ENCODE measurements at regions of chr6 and their contacts with region 1.

Region 1: DNA sequence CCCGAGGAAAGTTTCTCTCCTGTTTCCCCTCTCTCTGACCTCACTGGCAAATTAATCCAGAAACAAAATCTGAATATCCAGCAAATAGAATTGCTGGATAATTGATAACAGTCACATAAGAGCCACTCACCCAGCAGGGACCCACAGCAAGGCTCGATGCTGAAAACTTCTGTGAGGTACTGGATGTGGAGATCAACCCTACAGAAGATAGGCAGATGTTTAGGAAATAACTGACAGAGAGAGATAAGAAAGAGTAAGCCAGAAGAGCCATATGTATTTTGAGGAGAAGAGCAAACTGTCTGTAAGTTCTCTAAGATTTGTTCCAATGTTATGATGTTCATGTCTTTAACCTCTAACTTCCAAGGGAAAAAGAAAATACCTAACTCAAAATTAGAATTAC is 59.7 kb downstream of the PKHD1 start:
- DNase-seq: no peak
- ATAC-seq: no peak
- H3K4me3 ChIP-seq: no peak overlapping the region
- H3K27ac ChIP-seq: no peak overlapping the region
- H3K4me1 ChIP-seq: no peaks in the 10 kb centered on the region
- CTCF ChIP-seq: no peak
- EP300 ChIP-seq: no peak
- POLR2A ChIP-seq: no peak
- RAD21 ChIP-seq: no peak

Region 2: GRCh38 chr6:52010806-52011205 is 16.9 kb before region 1 on chr6:
- CTCF ChIA-PET with region 1: no interaction called
- POLR2A ChIA-PET with region 1: no interaction called
- DNase-seq: no peak
- ATAC-seq: no peak
- H3K4me3 ChIP-seq: no peak overlapping the region
- H3K27ac ChIP-seq: no peak overlapping the region
- H3K4me1 ChIP-seq: no peaks in the 10 kb centered on the region
- CTCF ChIP-seq: no peak
- EP300 ChIP-seq: no peak
- POLR2A ChIP-seq: no peak
- RAD21 ChIP-seq: no peak

Region 3: DNA sequence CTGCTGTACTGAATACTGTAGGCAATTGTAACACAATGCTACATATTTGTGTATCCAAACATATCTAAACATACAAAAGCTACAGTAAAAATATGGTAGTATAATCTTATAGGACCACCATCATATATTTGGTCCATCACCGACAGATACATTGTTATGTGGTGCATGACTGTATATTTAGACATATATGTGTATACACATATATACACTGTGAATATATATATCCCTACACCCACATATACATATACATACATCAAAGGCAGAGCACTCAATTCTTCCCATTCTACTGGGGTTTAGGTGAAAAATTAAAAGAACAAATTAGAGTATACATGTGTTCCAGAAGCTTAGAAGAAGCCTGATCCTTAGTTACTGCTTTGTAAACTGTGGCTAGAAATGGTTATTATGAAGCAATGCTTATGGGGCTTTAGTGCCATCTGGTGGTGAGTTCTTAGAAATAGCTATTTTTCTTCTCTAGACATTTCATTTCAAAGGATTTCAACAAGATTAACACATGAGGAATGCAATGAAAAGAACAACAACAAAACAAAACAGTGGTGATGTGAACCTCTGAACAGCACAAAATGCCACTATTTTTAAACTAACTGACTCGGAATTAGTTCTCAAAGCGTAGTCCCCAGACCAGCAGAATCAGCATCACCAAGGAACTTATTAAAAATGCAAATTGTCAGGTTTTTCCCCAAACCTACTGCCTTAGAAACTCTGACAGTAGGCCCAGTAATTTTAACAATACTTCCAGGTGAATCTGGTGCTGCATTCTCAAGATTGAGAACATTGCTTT is 21.8 kb after region 1 on chr6:
- CTCF ChIA-PET with region 1: interaction called, 10 read pairs
- POLR2A ChIA-PET with region 1: no interaction called
- DNase-seq: peak; percentile 13 to 21
- ATAC-seq: peak in 1 of 2 experiments; percentile 51; a peak in 1 of 6 replicates
- H3K4me3 ChIP-seq: no peak overlapping the region
- H3K27ac ChIP-seq: no peak overlapping the region
- H3K4me1 ChIP-seq: no peaks in the 10 kb centered on the region
- CTCF ChIP-seq: peak; percentile 56
- EP300 ChIP-seq: no peak
- POLR2A ChIP-seq: no peak
- RAD21 ChIP-seq: peak in 1 of 2 experiments; percentile 43; a peak in 3 of 5 replicates

Measured in A549 (cell line).